Activated T-helper 1 cell treated with anti-CD3 and anti-CD28 coated beads, Interleukin-12 subunit alpha, Interleukin-12 subunit beta, Interleukin-2, Interleukin-4 antibody, amounts not matched to agents 30 ng/mL and 10 ng/mL and 1 ng/mL, durations not matched to agents 14 hours and 24 hours and 36 hours (primary cell): ENCODE measurements at regions of chr17 and their contacts with region 1.

Region 1: DNA sequence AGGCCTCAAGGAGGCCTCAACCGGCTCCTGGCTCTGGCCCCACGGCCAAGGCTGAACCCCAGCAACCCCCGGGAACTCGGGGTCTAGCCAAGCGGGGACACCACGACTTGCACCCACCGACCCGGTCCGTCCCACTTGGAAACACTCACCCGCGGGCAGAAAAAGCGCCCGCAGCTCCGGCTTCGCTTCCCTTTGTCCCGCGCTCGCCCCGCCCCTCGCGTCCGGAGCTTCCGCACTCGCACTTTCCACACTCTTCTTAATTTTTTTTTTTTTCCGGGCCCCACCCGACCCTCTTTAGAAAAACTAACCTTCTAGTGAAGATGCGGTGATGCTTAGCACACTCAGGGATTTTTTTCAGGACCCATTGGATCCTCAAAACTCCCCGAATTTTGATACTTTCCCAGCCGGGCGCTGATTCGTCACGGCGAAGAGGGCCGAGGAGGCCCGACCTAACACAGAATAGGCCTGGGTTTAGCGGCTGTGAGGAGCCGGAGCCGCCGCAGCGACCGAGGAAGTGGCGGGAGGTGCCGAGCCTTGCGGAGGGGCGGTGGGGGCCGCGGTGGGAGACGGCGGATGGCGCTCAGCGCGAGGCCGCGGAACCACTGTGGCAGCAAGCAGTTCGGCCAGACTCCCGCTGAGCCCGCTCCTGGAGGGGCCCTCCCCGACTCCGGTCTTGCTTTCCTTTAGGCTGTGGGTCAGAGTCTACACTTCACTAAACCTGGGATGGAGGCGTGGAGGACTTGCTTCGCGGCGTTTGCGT is at the start of gene SMARCE1:
- DNase-seq: peak; percentile 62
- H3K4me3 Mint-ChIP-seq: peak within 1 kb of the TSS; percentile 89
- H3K27ac Mint-ChIP-seq: peak within 1 kb of the TSS; percentile 95
- H3K4me1 Mint-ChIP-seq: peaks cover 55% of the 10 kb centered on the region
- H3K27me3 Mint-ChIP-seq: peaks cover 2% of the 10 kb centered on the region
- total RNA-seq, gene SMARCE1: 125 and 132 TPM in 2 replicates

Region 2: GRCh38 chr17:40629842-40630241 is 18.0 kb before region 1 on chr17:
- intact Hi-C with region 1: loop called (anchors 2 kb)
- DNase-seq: no peak
- H3K4me3 Mint-ChIP-seq: no peak overlapping the region
- H3K27ac Mint-ChIP-seq: peak overlapping the region; percentile 74
- H3K4me1 Mint-ChIP-seq: peaks cover 31% of the 10 kb centered on the region
- H3K27me3 Mint-ChIP-seq: no peaks in the 10 kb centered on the region

Region 3: GRCh38 chr17:40818733-40819527 is 171.1 kb after region 1 on chr17:
- intact Hi-C with region 1: loop called (anchors 2 kb)
- DNase-seq: peak; percentile 85
- H3K4me3 Mint-ChIP-seq: peak overlapping the region; percentile 96
- H3K27ac Mint-ChIP-seq: peak overlapping the region; percentile 88
- H3K4me1 Mint-ChIP-seq: peaks cover 31% of the 10 kb centered on the region
- H3K27me3 Mint-ChIP-seq: peaks cover 11% of the 10 kb centered on the region